ENCODE measurements at regions of chr10 and their contacts with region 1.

Region 1: GRCh38 chr10:103977204-103977603 is 10.3 kb downstream of the SLK start:
- DNase-seq: no peak
- H3K4me3 ChIP-seq: no peak overlapping the region
- H3K4me3 Mint-ChIP-seq: no peak overlapping the region
- H3K27ac ChIP-seq: no peak overlapping the region
- H3K27ac Mint-ChIP-seq: peak overlapping the region in 1 of 7 donors; percentile 18
- H3K4me1 ChIP-seq: peaks cover 0 to 10% of the 10 kb centered on the region in 2 donors
- H3K4me1 Mint-ChIP-seq: peaks cover 27% of the 10 kb centered on the region
- H3K27me3 ChIP-seq: no peaks in the 10 kb centered on the region
- H3K27me3 Mint-ChIP-seq: peaks cover 0 to 3% (median 0%) of the 10 kb centered on the region in 3 donors
- CTCF ChIP-seq: no peak

Region 2: GRCh38 chr10:103901299-103901698 is 75.9 kb before region 1 on chr10:
- intact Hi-C with region 1: loop called in 1 of 2 experiments (anchors 5 kb)
- DNase-seq: no peak
- H3K4me3 ChIP-seq: peak overlapping the region in 1 of 3 experiments; percentile 25
- H3K4me3 Mint-ChIP-seq: peak overlapping the region in 1 of 2 donors; percentile 37
- H3K27ac ChIP-seq: peak overlapping the region in 1 of 2 donors; percentile 56
- H3K27ac Mint-ChIP-seq: peak overlapping the region in 2 of 7 donors; percentile 18 to 57
- H3K4me1 ChIP-seq: no peaks in the 10 kb centered on the region
- H3K4me1 Mint-ChIP-seq: peaks cover 8% of the 10 kb centered on the region
- H3K27me3 ChIP-seq: no peaks in the 10 kb centered on the region
- H3K27me3 Mint-ChIP-seq: no peaks in the 10 kb centered on the region
- CTCF ChIP-seq: no peak

Region 3: GRCh38 chr10:103912759-103913158 is 64.4 kb before region 1 on chr10:
- intact Hi-C with region 1: no loop called
- DNase-seq: no peak
- H3K4me3 ChIP-seq: no peak overlapping the region
- H3K4me3 Mint-ChIP-seq: no peak overlapping the region
- H3K27ac ChIP-seq: peak overlapping the region in 1 of 2 donors; percentile 34
- H3K27ac Mint-ChIP-seq: peak overlapping the region in 5 of 7 donors; percentile 21 to 88 (median 76)
- H3K4me1 ChIP-seq: peaks cover 60 to 74% of the 10 kb centered on the region in 2 donors
- H3K4me1 Mint-ChIP-seq: peaks cover 81% of the 10 kb centered on the region
- H3K27me3 ChIP-seq: no peaks in the 10 kb centered on the region
- H3K27me3 Mint-ChIP-seq: no peaks in the 10 kb centered on the region
- CTCF ChIP-seq: no peak

Region 4: GRCh38 chr10:104016661-104017060 is 39.5 kb after region 1 on chr10:
- intact Hi-C with region 1: no loop called
- DNase-seq: no peak
- H3K4me3 ChIP-seq: no peak overlapping the region
- H3K4me3 Mint-ChIP-seq: no peak overlapping the region
- H3K27ac ChIP-seq: no peak overlapping the region
- H3K27ac Mint-ChIP-seq: no peak overlapping the region
- H3K4me1 ChIP-seq: no peaks in the 10 kb centered on the region
- H3K4me1 Mint-ChIP-seq: no peaks in the 10 kb centered on the region
- H3K27me3 ChIP-seq: no peaks in the 10 kb centered on the region
- H3K27me3 Mint-ChIP-seq: no peaks in the 10 kb centered on the region
- CTCF ChIP-seq: no peak